GM12878 (cell line): ENCODE measurements at regions of chr19 and their contacts with region 1.

Region 1: GRCh38 chr19:37906869-37907734 is at the start of gene SIPA1L3:
- DNase-seq: peak; percentile 83
- ATAC-seq: peak; percentile 92
- H3K4me3 ChIP-seq: peak within 1 kb of the TSS; percentile 98
- H3K27ac ChIP-seq: peak within 1 kb of the TSS; percentile 64
- H3K4me1 ChIP-seq: peaks cover 25% of the 10 kb centered on the region
- H3K27me3 ChIP-seq: no peaks in the 10 kb centered on the region
- CTCF ChIP-seq: no peak
- EP300 ChIP-seq: 0 out of 4 replicates have a peak, but pooled peaks of 1 of the 2 experiments have one; percentile 6
- POLR2A ChIP-seq: peak; percentile 79
- RAD21 ChIP-seq: no peak
- polyA plus RNA-seq, gene SIPA1L3: 0.24 to 0.63 TPM

Region 2: GRCh38 chr19:37790244-37790925 is 116.7 kb before region 1 on chr19:
- CTCF ChIA-PET with region 1: no interaction called
- POLR2A ChIA-PET with region 1: no interaction called
- RAD21 ChIA-PET with region 1: no interaction called
- SMC1A ChIA-PET with region 1: no interaction called
- in situ Hi-C with region 1: no loop called
- intact Hi-C with region 1: no loop called
- DNase-seq: no peak
- ATAC-seq: no peak
- H3K4me3 ChIP-seq: no peak overlapping the region
- H3K27ac ChIP-seq: no peak overlapping the region
- H3K4me1 ChIP-seq: no peaks in the 10 kb centered on the region
- H3K27me3 ChIP-seq: no peaks in the 10 kb centered on the region
- CTCF ChIP-seq: no peak
- EP300 ChIP-seq: no peak
- POLR2A ChIP-seq: no peak
- RAD21 ChIP-seq: no peak

Region 3: GRCh38 chr19:37953533-37954303 is 46.6 kb after region 1 on chr19:
- CTCF ChIA-PET with region 1: interaction called, 5 read pairs
- POLR2A ChIA-PET with region 1: interaction called, 5 read pairs
- RAD21 ChIA-PET with region 1: no interaction called
- SMC1A ChIA-PET with region 1: interaction called, 12 read pairs
- in situ Hi-C with region 1: no loop called
- intact Hi-C with region 1: no loop called
- DNase-seq: no peak
- ATAC-seq: no peak
- H3K4me3 ChIP-seq: no peak overlapping the region
- H3K27ac ChIP-seq: peak overlapping the region; percentile 57
- H3K4me1 ChIP-seq: peaks cover 45% of the 10 kb centered on the region
- H3K27me3 ChIP-seq: no peaks in the 10 kb centered on the region
- CTCF ChIP-seq: no peak
- EP300 ChIP-seq: no peak
- POLR2A ChIP-seq: no peak
- RAD21 ChIP-seq: no peak

Region 4: GRCh38 chr19:37987356-37988332 is 80.5 kb after region 1 on chr19:
- CTCF ChIA-PET with region 1: interaction called, 183 read pairs
- POLR2A ChIA-PET with region 1: interaction called, 20 read pairs
- RAD21 ChIA-PET with region 1: interaction called, 98 read pairs
- SMC1A ChIA-PET with region 1: interaction called, 39 read pairs
- in situ Hi-C with region 1: no loop called
- intact Hi-C with region 1: no loop called
- DNase-seq: no peak
- ATAC-seq: peak; percentile 77
- H3K4me3 ChIP-seq: no peak overlapping the region
- H3K27ac ChIP-seq: peak overlapping the region; percentile 86
- H3K4me1 ChIP-seq: peaks cover 34% of the 10 kb centered on the region
- H3K27me3 ChIP-seq: no peaks in the 10 kb centered on the region
- CTCF ChIP-seq: peak; percentile 26 to 58 (median 39); a peak in 4 of 6 replicates
- EP300 ChIP-seq: no peak
- POLR2A ChIP-seq: no peak
- RAD21 ChIP-seq: peak; percentile 54

Region 5: GRCh38 chr19:38049105-38049649 is 142.1 kb after region 1 on chr19:
- CTCF ChIA-PET with region 1: interaction called, 138 read pairs
- POLR2A ChIA-PET with region 1: interaction called, 25 read pairs
- RAD21 ChIA-PET with region 1: interaction called, 37 read pairs
- SMC1A ChIA-PET with region 1: interaction called, 119 read pairs
- in situ Hi-C with region 1: loop called (anchors 5 kb)
- intact Hi-C with region 1: loop called (anchors 1 kb)
- DNase-seq: peak; percentile 93
- ATAC-seq: peak; percentile 54
- H3K4me3 ChIP-seq: peak overlapping the region; percentile 57
- H3K27ac ChIP-seq: peak overlapping the region; percentile 99
- H3K4me1 ChIP-seq: peaks cover 54% of the 10 kb centered on the region
- H3K27me3 ChIP-seq: no peaks in the 10 kb centered on the region
- CTCF ChIP-seq: peak in 1 of 3 experiments; percentile 6; a peak in 1 of 6 replicates
- EP300 ChIP-seq: peak; percentile 21 to 26; a peak in 1 of 4 replicates
- POLR2A ChIP-seq: peak; percentile 86
- RAD21 ChIP-seq: 0 out of 2 replicates have a peak, but pooled peaks have one; percentile 10

Region 6: DNA sequence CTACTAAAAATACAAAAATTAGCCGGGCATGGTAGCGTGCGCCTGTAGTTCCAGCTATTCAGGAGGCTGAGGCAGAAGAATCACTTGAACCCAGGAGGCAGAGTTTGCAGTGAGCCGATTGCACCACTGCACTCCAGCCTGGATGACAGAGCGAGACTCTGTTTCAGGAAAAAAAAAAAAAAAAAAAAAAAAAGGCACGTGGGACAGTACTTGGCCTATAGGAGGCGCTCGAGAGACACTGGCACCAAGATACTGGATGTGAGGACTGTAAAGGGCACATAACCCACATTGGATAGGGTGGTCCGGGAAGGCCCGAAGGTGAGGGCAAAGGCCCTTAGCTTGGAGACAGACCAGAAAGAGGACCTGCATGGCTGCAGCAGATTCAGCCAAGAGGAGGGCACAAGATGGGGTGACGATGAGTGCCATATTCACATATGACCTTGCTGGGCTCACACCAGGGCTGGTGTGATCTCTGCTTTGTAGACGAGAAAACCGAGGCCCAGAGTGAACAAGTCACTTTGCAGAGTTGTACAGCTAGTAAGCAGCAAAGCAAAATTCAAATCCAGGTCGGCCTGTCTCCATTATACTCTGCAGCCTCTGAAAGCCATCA is 227.5 kb after region 1 on chr19:
- CTCF ChIA-PET with region 1: interaction called, 19 read pairs
- POLR2A ChIA-PET with region 1: no interaction called
- RAD21 ChIA-PET with region 1: interaction called, 7 read pairs
- SMC1A ChIA-PET with region 1: interaction called, 14 read pairs
- in situ Hi-C with region 1: no loop called
- intact Hi-C with region 1: no loop called
- DNase-seq: no peak
- ATAC-seq: peak; percentile 56
- H3K4me3 ChIP-seq: no peak overlapping the region
- H3K27ac ChIP-seq: no peak overlapping the region
- H3K4me1 ChIP-seq: no peaks in the 10 kb centered on the region
- H3K27me3 ChIP-seq: no peaks in the 10 kb centered on the region
- CTCF ChIP-seq: peak; percentile 35 to 70 (median 53); a peak in 5 of 6 replicates
- EP300 ChIP-seq: no peak
- POLR2A ChIP-seq: no peak
- RAD21 ChIP-seq: peak; percentile 19; the same call in 1 of the 2 replicates

Region 7: DNA sequence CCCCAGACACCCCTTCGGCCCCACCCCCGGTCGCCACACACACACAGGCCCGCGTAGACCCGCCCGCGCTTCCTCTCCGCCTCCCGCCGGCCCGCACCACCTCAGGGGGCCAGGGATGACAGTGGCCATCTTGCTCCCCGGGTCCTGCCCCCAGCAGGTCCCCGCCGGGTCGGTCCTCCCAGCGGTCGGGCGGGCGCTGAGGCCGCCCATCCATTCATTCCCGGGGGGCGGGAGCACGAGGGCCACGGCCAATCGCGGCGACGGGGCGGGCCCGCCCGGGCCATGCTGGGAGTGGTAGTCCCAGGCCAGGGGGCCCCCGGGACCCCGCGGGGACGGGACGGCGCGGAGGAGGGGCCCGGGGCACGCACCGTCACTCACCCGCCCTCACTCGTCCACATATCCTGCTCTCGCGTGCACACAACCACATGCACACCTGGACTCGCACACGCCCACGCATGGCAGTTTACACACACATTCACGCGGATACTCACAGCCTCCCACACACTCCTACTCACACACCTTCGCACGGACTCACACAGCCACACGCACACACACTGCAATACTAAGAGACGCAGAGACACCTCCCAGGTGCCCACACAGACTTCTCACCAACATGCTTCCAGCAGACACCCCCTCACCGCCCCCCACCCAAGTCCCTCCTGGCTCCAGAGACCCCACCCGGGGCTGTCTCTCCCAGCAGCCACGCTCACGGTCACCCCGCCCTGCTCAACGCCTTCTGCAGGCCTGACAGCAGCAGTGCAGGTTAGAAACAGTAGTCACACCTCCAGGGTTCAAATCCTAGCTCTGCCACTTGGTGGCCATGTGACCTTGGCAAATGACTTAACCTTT is 317.1 kb after region 1 on chr19 and contains the start of gene DPF1:
- CTCF ChIA-PET with region 1: interaction called, 80 read pairs
- POLR2A ChIA-PET with region 1: interaction called, 4 read pairs
- RAD21 ChIA-PET with region 1: interaction called, 16 read pairs
- SMC1A ChIA-PET with region 1: interaction called, 16 read pairs
- in situ Hi-C with region 1: no loop called
- intact Hi-C with region 1: no loop called
- DNase-seq: peak; percentile 17
- ATAC-seq: peak; percentile 94
- H3K4me3 ChIP-seq: peak within 1 kb of the TSS; percentile 89
- H3K27ac ChIP-seq: no peak within 1 kb of the TSS
- H3K4me1 ChIP-seq: 0 out of 2 replicates have a peak, but pooled peaks cover 4% of the 10 kb centered on the region
- H3K27me3 ChIP-seq: peaks cover 8% of the 10 kb centered on the region in 2 experiments; a peak in 3 of 4 replicates
- CTCF ChIP-seq: peak; percentile 28 to 42 (median 39); a peak in 4 of 6 replicates
- EP300 ChIP-seq: 0 out of 4 replicates have a peak, but pooled peaks of 1 of the 2 experiments have one; percentile 26
- POLR2A ChIP-seq: peak; percentile 64
- RAD21 ChIP-seq: 0 out of 2 replicates have a peak, but pooled peaks have one; percentile 19
- polyA plus RNA-seq, gene DPF1: 0.11 to 0.18 TPM

Region 8: GRCh38 chr19:38335949-38336637 is 429.0 kb after region 1 on chr19:
- CTCF ChIA-PET with region 1: interaction called, 7 read pairs
- POLR2A ChIA-PET with region 1: interaction called, 5 read pairs
- RAD21 ChIA-PET with region 1: interaction called, 10 read pairs
- SMC1A ChIA-PET with region 1: interaction called, 7 read pairs
- in situ Hi-C with region 1: no loop called
- intact Hi-C with region 1: loop called (anchors 1 kb)
- DNase-seq: peak; percentile 80
- ATAC-seq: peak; percentile 90
- H3K4me3 ChIP-seq: peak overlapping the region; percentile 79
- H3K27ac ChIP-seq: peak overlapping the region; percentile 91
- H3K4me1 ChIP-seq: peaks cover 3% of the 10 kb centered on the region; the same call in 1 of the 2 replicates
- H3K27me3 ChIP-seq: no peaks in the 10 kb centered on the region
- CTCF ChIP-seq: no peak
- EP300 ChIP-seq: no peak
- POLR2A ChIP-seq: peak; percentile 69; the same call in 1 of the 2 replicates
- RAD21 ChIP-seq: no peak